K562 (cell line): ENCODE measurements at regions of chrX and their contacts with region 1.

Region 1: GRCh38 chrX:85851418-85851817 is 195.9 kb downstream of the CHM start:
- DNase-seq: peak in 3 of 4 experiments; percentile 3 to 39 (median 4)
- ATAC-seq: peak; percentile 64; the same call in 1 of the 3 replicates
- H3K4me3 ChIP-seq: no peak overlapping the region
- H3K27ac ChIP-seq: no peak overlapping the region
- H3K4me1 ChIP-seq: no peaks in the 10 kb centered on the region
- H3K27me3 ChIP-seq: no peaks in the 10 kb centered on the region
- CTCF ChIP-seq: peak in 2 of 3 experiments; percentile 38 to 51; a peak in 3 of 6 replicates
- EP300 ChIP-seq: no peak
- POLR2A ChIP-seq: no peak
- RAD21 ChIP-seq: peak in 1 of 2 experiments; percentile 71; a peak in 2 of 4 replicates

Region 2: GRCh38 chrX:86066997-86067396 is 215.6 kb after region 1 on chrX:
- CTCF ChIA-PET with region 1: interaction called, 9 read pairs
- POLR2A ChIA-PET with region 1: no interaction called
- in situ Hi-C with region 1: loop called (anchors 25 kb)
- intact Hi-C with region 1: loop called (anchors 1 kb)
- DNase-seq: peak in 2 of 4 experiments; percentile 6 to 52
- ATAC-seq: peak; percentile 70
- H3K4me3 ChIP-seq: no peak overlapping the region
- H3K27ac ChIP-seq: no peak overlapping the region
- H3K4me1 ChIP-seq: no peaks in the 10 kb centered on the region
- H3K27me3 ChIP-seq: no peaks in the 10 kb centered on the region
- CTCF ChIP-seq: peak; percentile 17 to 72 (median 55); a peak in 4 of 6 replicates
- EP300 ChIP-seq: no peak
- POLR2A ChIP-seq: no peak
- RAD21 ChIP-seq: peak in 1 of 2 experiments; percentile 50; a peak in 3 of 4 replicates